GM23248 (cell line): ENCODE measurements at regions of chr7 and their contacts with region 1.

Region 1: GRCh38 chr7:84914598-84914997 is 272.3 kb downstream of the SEMA3D start:
- DNase-seq: no peak
- H3K4me3 ChIP-seq: no peak overlapping the region
- H3K27ac ChIP-seq: no peak overlapping the region
- H3K4me1 ChIP-seq: peaks cover 15% of the 10 kb centered on the region
- H3K27me3 ChIP-seq: no peaks in the 10 kb centered on the region

Region 2: DNA sequence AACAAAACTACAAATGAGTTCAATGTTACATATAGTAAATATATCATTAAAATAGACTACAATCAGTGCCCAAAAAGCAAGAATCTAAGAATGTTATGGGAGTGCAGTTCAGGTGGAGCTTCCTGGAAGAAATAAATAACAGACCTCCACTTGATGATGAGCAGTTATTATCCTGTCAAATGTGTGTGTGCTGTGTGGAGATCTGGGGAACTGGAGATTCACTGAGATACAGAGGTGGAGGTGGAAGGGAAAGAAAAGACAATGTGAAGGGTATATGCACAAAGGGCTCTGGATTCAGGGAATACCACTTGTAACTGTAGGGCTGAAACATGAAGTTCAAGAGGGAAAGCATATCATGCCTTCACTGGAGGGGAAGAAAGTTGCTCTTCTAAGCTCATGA is 58.8 kb before region 1 on chr7:
- in situ Hi-C with region 1: loop called (anchors 10 kb)
- DNase-seq: no peak
- H3K4me3 ChIP-seq: no peak overlapping the region
- H3K27ac ChIP-seq: no peak overlapping the region
- H3K4me1 ChIP-seq: no peaks in the 10 kb centered on the region
- H3K27me3 ChIP-seq: no peaks in the 10 kb centered on the region

Region 3: DNA sequence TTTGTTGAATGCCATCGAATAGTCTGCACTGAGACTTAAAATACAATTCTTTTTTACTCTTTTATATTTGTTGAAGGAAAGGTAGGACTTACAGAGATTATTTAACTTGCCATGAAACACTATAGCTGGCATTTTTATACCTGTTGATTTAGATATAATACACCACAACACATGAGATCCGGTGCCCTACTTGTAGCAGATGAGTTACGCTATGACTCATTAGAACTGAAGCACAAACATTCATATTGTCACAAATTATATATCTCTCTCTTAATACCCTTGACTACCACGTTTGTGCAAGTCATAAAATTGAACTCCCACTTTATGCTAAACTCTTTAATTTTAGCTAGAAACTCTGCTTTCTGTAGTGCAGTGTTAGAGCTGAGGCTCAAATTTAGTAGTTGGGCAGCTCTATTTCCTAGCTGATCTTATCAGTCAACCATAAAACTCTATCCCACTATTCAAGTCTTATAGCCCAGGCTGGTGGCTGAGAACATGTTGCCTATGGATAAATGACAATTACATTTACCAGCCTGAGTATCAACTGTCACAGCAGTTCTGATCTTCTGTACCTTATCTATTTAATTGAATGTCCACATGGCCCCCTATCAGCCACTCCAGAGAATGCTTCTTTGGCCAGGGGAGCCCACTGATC is 409.7 kb after region 1 on chr7:
- in situ Hi-C with region 1: no loop called
- DNase-seq: no peak
- H3K4me3 ChIP-seq: no peak overlapping the region
- H3K27ac ChIP-seq: no peak overlapping the region
- H3K4me1 ChIP-seq: no peaks in the 10 kb centered on the region
- H3K27me3 ChIP-seq: no peaks in the 10 kb centered on the region